A549 (cell line): ENCODE measurements at regions of chr4 and their contacts with region 1.

Region 1: DNA sequence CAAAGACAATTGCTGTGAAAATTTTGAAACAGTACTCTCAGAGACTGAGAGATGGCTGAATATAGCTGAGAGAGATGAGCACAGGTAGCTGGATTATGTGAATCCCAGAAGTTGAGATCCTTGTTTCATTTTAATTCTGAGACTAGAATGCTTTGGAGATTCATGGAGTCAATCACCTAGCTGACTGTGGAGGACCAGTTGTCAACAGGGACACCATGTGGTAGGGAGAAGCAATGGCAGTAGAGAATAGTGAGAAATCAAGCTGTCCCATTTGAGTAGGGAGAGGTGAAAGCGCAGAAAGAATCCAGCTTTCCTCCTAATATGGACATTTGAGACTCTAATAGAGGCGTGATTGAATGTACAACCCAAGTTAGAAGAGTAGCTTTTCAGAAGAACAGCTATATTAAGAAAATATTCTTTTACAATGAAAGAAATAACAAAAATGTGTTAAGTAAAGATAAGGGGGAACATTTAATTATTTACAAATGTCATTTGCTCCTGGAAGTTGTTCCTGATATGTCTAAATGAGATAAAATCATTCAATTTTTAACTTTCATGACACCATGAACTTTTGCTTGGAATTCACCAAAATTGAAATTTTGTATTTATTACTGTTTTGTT is 30.3 kb upstream of the GLRB start:
- DNase-seq: peak; percentile 22 to 54
- ATAC-seq: peak; percentile 91 to 94
- H3K4me3 ChIP-seq: no peak overlapping the region
- H3K27ac ChIP-seq: no peak overlapping the region
- H3K4me1 ChIP-seq: no peaks in the 10 kb centered on the region
- CTCF ChIP-seq: peak; percentile 62
- EP300 ChIP-seq: no peak
- POLR2A ChIP-seq: no peak
- RAD21 ChIP-seq: peak; percentile 73 to 79

Region 2: DNA sequence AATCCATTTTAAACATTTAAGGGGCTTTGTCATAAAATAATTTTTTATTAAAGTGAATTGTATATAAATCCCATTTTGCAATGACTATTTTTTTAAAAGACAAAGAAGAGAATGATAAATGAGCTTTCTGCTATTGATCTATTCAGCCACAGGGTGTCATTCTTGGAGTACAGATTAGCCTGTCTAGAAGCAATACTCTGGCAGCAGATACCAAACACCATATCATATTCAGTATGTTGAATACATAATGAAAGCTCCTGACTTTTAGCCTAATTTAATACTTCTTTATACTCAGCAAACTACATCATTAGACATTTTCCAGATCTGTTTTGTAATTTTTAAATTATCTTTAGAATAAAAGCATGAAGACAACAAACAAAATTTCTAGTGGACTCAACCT is 570.3 kb before region 1 on chr4:
- CTCF ChIA-PET with region 1: interaction called, 12 read pairs
- POLR2A ChIA-PET with region 1: no interaction called
- DNase-seq: peak in 1 of 2 experiments; percentile 21
- ATAC-seq: peak in 1 of 2 experiments; percentile 77; a peak in 4 of 6 replicates
- H3K4me3 ChIP-seq: no peak overlapping the region
- H3K27ac ChIP-seq: no peak overlapping the region; a peak in 1 of 6 replicates
- H3K4me1 ChIP-seq: peaks cover 4% of the 10 kb centered on the region; the same call in 1 of the 3 replicates
- CTCF ChIP-seq: peak; percentile 49
- EP300 ChIP-seq: no peak
- POLR2A ChIP-seq: no peak
- RAD21 ChIP-seq: peak; percentile 63 to 72

Region 3: DNA sequence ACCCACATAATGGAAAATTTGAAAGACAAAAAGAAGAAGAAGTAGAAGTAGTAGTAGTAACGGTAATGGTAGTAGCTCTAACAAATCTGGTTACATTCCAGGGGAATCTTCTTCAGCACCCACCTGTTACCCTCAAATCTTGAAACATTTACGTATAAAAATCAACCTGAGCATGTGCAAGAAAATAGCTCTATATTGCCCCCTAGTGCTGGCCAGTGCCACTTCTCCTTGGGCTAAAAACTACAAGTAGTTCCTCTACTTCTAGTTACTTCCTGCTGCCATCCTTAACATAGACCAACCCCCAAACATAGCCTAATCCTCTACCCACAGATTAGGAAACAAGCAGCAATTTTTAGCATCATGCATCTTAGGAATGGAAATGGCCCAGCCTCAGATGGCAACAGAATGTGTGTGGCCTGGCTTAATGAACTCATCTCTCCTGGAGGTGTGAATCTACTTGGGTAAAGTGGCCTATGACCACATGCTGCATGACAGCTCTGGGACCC is 77.1 kb before region 1 on chr4:
- CTCF ChIA-PET with region 1: interaction called, 11 read pairs
- POLR2A ChIA-PET with region 1: no interaction called
- DNase-seq: peak; percentile 25 to 67
- ATAC-seq: peak in 1 of 2 experiments; percentile 57; a peak in 3 of 6 replicates
- H3K4me3 ChIP-seq: no peak overlapping the region
- H3K27ac ChIP-seq: peak overlapping the region in 1 of 2 experiments; percentile 31; a peak in 1 of 6 replicates
- H3K4me1 ChIP-seq: 0 out of 3 replicates have a peak, but pooled peaks cover 8% of the 10 kb centered on the region
- CTCF ChIP-seq: peak; percentile 65
- EP300 ChIP-seq: no peak
- POLR2A ChIP-seq: no peak
- RAD21 ChIP-seq: peak; percentile 80 to 84

Region 4: DNA sequence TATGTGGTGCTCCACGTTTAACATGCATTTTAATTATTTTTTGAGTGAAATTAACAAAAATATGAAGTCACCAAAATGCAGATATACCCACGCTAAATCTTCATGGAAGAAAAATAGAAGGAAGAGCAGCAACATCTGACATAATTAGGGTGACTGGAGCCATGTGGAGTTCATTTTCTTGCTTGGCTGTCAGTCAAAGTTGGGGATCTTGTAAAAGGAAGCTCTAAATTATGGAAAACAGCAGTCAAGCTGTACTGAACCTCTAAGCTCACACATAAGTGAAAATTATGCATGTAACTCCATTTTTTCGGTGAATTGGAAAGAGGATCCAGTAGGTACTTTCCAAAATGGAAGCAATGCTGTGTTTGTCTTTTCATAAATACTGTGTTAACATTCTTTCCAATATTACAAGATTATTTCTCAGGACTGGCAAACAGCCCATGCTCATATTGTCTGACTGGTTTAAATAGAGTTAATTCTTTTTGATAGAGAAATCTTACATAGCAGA is 64.3 kb before region 1 on chr4:
- CTCF ChIA-PET with region 1: interaction called, 14 read pairs
- POLR2A ChIA-PET with region 1: no interaction called
- DNase-seq: no peak
- ATAC-seq: no peak
- H3K4me3 ChIP-seq: no peak overlapping the region
- H3K27ac ChIP-seq: no peak overlapping the region
- H3K4me1 ChIP-seq: no peaks in the 10 kb centered on the region
- CTCF ChIP-seq: no peak
- EP300 ChIP-seq: no peak
- POLR2A ChIP-seq: no peak
- RAD21 ChIP-seq: no peak